ENCODE measurements at regions of chr11 and their contacts with region 1.

Region 1: GRCh38 chr11:12331239-12331874 is 46.0 kb upstream of the PARVA start:
- DNase-seq: peak; percentile 44 to 74 (median 67)
- ATAC-seq: peak; percentile 63
- H3K4me3 ChIP-seq: no peak overlapping the region
- H3K4me3 Mint-ChIP-seq: no peak overlapping the region
- H3K27ac ChIP-seq: no peak overlapping the region
- H3K27ac Mint-ChIP-seq: no peak overlapping the region
- H3K4me1 ChIP-seq: no peaks in the 10 kb centered on the region
- H3K4me1 Mint-ChIP-seq: peaks cover 0 to 12% (median 4%) of the 10 kb centered on the region in 7 donors
- H3K27me3 ChIP-seq: no peaks in the 10 kb centered on the region
- H3K27me3 Mint-ChIP-seq: peaks cover 0 to 4% (median 0%) of the 10 kb centered on the region in 5 donors

Region 2: DNA sequence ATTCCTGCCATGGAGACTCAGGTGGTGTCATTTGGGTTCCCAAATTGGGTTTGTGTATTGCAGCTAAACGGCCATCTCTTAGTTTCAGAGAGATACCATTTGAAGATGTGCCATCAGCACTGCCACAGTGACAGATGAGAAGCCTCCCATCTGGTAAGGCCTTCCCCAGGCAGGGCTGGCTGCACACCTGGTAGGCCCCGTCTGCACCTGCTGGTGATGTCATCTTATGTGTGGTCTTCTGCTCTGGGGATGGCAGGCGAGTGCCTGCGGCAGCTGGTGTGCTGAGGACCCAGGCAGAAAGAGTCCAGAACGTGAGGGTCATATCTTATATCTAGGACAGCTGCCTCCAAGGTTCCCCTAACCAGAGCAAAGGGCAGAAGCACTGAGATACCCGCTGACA is 1079.0 kb before region 1 on chr11:
- CTCF ChIA-PET with region 1: no interaction called
- POLR2A ChIA-PET with region 1: no interaction called
- intact Hi-C with region 1: no loop called
- DNase-seq: no peak
- ATAC-seq: no peak
- H3K4me3 ChIP-seq: no peak overlapping the region
- H3K4me3 Mint-ChIP-seq: no peak overlapping the region
- H3K27ac ChIP-seq: no peak overlapping the region
- H3K27ac Mint-ChIP-seq: no peak overlapping the region
- H3K4me1 ChIP-seq: no peaks in the 10 kb centered on the region
- H3K4me1 Mint-ChIP-seq: peaks cover 0 to under 1% (median 0%) of the 10 kb centered on the region in 7 donors
- H3K27me3 ChIP-seq: no peaks in the 10 kb centered on the region
- H3K27me3 Mint-ChIP-seq: peaks cover 0 to 12% (median 2%) of the 10 kb centered on the region in 5 donors

Region 3: GRCh38 chr11:12182676-12183541 is 148.4 kb before region 1 on chr11:
- CTCF ChIA-PET with region 1: no interaction called
- POLR2A ChIA-PET with region 1: no interaction called
- intact Hi-C with region 1: no loop called
- DNase-seq: peak in 1 of 9 donors; percentile 9
- ATAC-seq: no peak
- H3K4me3 ChIP-seq: no peak overlapping the region
- H3K4me3 Mint-ChIP-seq: no peak overlapping the region
- H3K27ac ChIP-seq: no peak overlapping the region
- H3K27ac Mint-ChIP-seq: peak overlapping the region in 1 of 9 donors; percentile 46
- H3K4me1 ChIP-seq: no peaks in the 10 kb centered on the region
- H3K4me1 Mint-ChIP-seq: peaks cover 11 to 46% (median 23%) of the 10 kb centered on the region in 7 donors
- H3K27me3 ChIP-seq: no peaks in the 10 kb centered on the region
- H3K27me3 Mint-ChIP-seq: no peaks in the 10 kb centered on the region

Region 4: GRCh38 chr11:12361682-12362081 is 30.3 kb after region 1 on chr11:
- CTCF ChIA-PET with region 1: interaction called, 16 read pairs
- POLR2A ChIA-PET with region 1: interaction called, 3 read pairs
- intact Hi-C with region 1: loop called in 1 of 2 experiments (anchors 1 kb)
- DNase-seq: no peak
- ATAC-seq: no peak
- H3K4me3 ChIP-seq: no peak overlapping the region
- H3K4me3 Mint-ChIP-seq: peak overlapping the region in 1 of 10 donors; percentile 19
- H3K27ac ChIP-seq: no peak overlapping the region
- H3K27ac Mint-ChIP-seq: peak overlapping the region in 8 of 9 donors; percentile 20 to 97 (median 70)
- H3K4me1 ChIP-seq: peaks cover 46 to 56% of the 10 kb centered on the region in 2 donors
- H3K4me1 Mint-ChIP-seq: peaks cover 20 to 83% (median 79%) of the 10 kb centered on the region in 7 donors
- H3K27me3 ChIP-seq: no peaks in the 10 kb centered on the region
- H3K27me3 Mint-ChIP-seq: peaks cover 0 to 4% (median 0%) of the 10 kb centered on the region in 5 donors

Region 5: DNA sequence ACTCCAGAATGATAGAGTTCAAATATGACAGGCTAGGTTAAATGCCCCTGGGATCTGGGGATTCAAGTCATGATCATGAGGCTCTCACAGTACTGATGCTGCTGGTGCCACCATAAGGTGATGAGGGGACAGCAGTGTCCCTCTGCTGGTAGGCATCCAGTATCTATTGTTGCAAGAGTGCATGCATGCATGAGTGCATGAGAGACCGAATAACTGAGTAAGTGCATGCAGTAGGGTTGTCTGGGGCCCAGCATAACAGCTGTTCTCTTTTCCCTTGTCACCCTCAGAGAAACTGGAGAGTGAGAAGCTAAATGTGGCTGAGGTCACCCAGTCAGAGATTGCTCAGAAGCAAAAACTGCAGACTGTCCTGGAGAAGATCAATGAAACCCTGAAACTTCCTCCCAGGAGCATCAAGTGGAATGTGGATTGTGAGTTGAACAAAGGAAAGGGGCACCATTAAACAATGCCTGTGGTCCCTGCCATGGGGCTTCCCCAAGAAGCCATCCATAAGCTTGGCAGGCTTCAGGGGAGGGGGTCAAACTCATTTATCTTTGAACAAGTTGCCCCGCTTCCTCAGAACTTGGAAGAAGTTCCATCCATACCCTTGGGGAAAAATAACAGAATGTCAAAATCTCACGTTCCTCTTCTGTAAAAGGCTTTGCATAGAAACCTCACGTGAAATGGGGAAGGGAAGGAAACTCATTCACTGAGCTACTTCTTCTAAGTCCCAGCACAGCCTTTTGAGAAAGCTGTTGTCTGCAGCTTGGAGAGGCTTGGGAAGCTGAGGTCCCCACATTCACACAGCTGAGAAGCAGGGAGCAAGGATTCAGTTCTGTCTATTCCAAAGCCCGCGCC is 165.0 kb after region 1 on chr11:
- CTCF ChIA-PET with region 1: no interaction called
- POLR2A ChIA-PET with region 1: no interaction called
- intact Hi-C with region 1: loop called in 1 of 2 experiments (anchors 1 kb)
- DNase-seq: no peak
- ATAC-seq: no peak
- H3K4me3 ChIP-seq: no peak overlapping the region
- H3K4me3 Mint-ChIP-seq: no peak overlapping the region
- H3K27ac ChIP-seq: no peak overlapping the region
- H3K27ac Mint-ChIP-seq: no peak overlapping the region
- H3K4me1 ChIP-seq: no peaks in the 10 kb centered on the region
- H3K4me1 Mint-ChIP-seq: no peaks in the 10 kb centered on the region
- H3K27me3 ChIP-seq: no peaks in the 10 kb centered on the region
- H3K27me3 Mint-ChIP-seq: peaks cover 0 to 25% (median 5%) of the 10 kb centered on the region in 5 donors

Region 6: GRCh38 chr11:12746593-12747097 is 415.3 kb after region 1 on chr11:
- CTCF ChIA-PET with region 1: no interaction called
- POLR2A ChIA-PET with region 1: no interaction called
- intact Hi-C with region 1: loop called in 1 of 2 experiments (anchors 5 kb)
- DNase-seq: no peak
- ATAC-seq: no peak
- H3K4me3 ChIP-seq: no peak overlapping the region
- H3K4me3 Mint-ChIP-seq: no peak overlapping the region
- H3K27ac ChIP-seq: no peak overlapping the region
- H3K27ac Mint-ChIP-seq: peak overlapping the region in 1 of 9 donors; percentile 56
- H3K4me1 ChIP-seq: no peaks in the 10 kb centered on the region
- H3K4me1 Mint-ChIP-seq: no peaks in the 10 kb centered on the region
- H3K27me3 ChIP-seq: no peaks in the 10 kb centered on the region
- H3K27me3 Mint-ChIP-seq: peaks cover 8 to 28% (median 23%) of the 10 kb centered on the region in 5 donors

Region 7: GRCh38 chr11:12893787-12894672 is 562.7 kb after region 1 on chr11:
- CTCF ChIA-PET with region 1: interaction called, 114 read pairs
- POLR2A ChIA-PET with region 1: interaction called, 3 read pairs
- intact Hi-C with region 1: loop called (anchors 1 kb)
- DNase-seq: peak in 7 of 9 donors; percentile 12 to 53 (median 39)
- ATAC-seq: peak; percentile 55
- H3K4me3 ChIP-seq: no peak overlapping the region
- H3K4me3 Mint-ChIP-seq: no peak overlapping the region
- H3K27ac ChIP-seq: no peak overlapping the region
- H3K27ac Mint-ChIP-seq: no peak overlapping the region
- H3K4me1 ChIP-seq: no peaks in the 10 kb centered on the region
- H3K4me1 Mint-ChIP-seq: no peaks in the 10 kb centered on the region
- H3K27me3 ChIP-seq: no peaks in the 10 kb centered on the region
- H3K27me3 Mint-ChIP-seq: peaks cover 17 to 29% (median 22%) of the 10 kb centered on the region in 5 donors

Region 8: GRCh38 chr11:13343931-13344717 is 1012.8 kb after region 1 on chr11:
- CTCF ChIA-PET with region 1: interaction called, 3 read pairs
- POLR2A ChIA-PET with region 1: no interaction called
- intact Hi-C with region 1: loop called in 1 of 2 experiments (anchors 10 kb)
- DNase-seq: peak; percentile 42 to 68 (median 62)
- ATAC-seq: peak; percentile 79
- H3K4me3 ChIP-seq: no peak overlapping the region
- H3K4me3 Mint-ChIP-seq: no peak overlapping the region
- H3K27ac ChIP-seq: no peak overlapping the region
- H3K27ac Mint-ChIP-seq: peak overlapping the region in 6 of 9 donors; percentile 2 to 25 (median 10)
- H3K4me1 ChIP-seq: peaks cover 12 to 15% of the 10 kb centered on the region in 2 donors
- H3K4me1 Mint-ChIP-seq: peaks cover 41 to 82% (median 65%) of the 10 kb centered on the region in 7 donors
- H3K27me3 ChIP-seq: no peaks in the 10 kb centered on the region
- H3K27me3 Mint-ChIP-seq: no peaks in the 10 kb centered on the region